Activated CD8-positive, alpha-beta T cell treated with anti-CD3 and anti-CD28 coated beads for 36 hours (primary cell): ENCODE measurements at regions of chr9 and their contacts with region 1.

Region 1: DNA sequence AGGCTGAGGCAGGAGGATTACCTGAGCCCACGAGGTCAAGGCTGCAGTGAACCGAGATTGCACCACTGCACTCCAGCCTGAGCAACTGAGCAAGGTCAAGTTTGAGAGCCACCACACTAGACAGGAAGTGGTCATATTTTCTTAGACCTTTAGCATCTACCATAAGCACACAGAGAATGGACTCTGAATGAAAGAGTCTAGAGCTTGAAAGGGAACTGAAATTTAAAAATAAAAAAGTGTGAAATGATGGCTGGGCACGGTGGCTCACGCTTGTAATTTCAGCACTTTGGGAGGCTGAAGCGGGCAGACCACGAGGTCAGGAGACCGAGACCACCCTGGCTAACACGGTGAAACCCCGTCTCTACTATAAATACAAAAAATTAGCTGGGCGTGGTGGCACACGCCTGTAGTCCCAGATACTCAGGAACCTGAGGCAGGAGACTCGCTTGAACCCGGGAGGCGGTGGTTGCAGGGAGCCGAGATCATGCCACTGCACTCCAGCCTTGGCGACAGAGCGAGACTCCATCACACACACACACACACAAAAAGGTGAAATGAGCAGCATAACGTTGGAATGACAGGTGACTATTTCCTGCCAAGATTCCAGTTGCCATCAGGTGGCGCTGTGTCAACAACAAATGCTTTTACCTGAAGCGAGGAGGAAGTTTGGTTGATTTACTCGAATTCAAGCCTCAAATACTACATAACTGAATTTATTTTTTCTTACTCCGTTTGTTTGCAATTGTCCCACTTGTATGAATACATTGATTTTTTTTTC is 21.3 kb upstream of the AK3 start:
- DNase-seq: peak; percentile 92
- ATAC-seq: peak; percentile 82
- H3K4me3 Mint-ChIP-seq: peak overlapping the region; percentile 40
- H3K27ac Mint-ChIP-seq: peak overlapping the region; percentile 49
- H3K4me1 Mint-ChIP-seq: peaks cover 12% of the 10 kb centered on the region
- H3K27me3 Mint-ChIP-seq: peaks cover 11% of the 10 kb centered on the region
- CTCF ChIP-seq: peak; percentile 83

Region 2: GRCh38 chr9:3916984-3917383 is 845.3 kb before region 1 on chr9:
- CTCF ChIA-PET with region 1: no interaction called
- POLR2A ChIA-PET with region 1: no interaction called
- intact Hi-C with region 1: no loop called
- DNase-seq: no peak
- ATAC-seq: no peak
- H3K4me3 Mint-ChIP-seq: no peak overlapping the region
- H3K27ac Mint-ChIP-seq: no peak overlapping the region
- H3K4me1 Mint-ChIP-seq: no peaks in the 10 kb centered on the region
- H3K27me3 Mint-ChIP-seq: peaks cover 4% of the 10 kb centered on the region
- CTCF ChIP-seq: no peak

Region 3: DNA sequence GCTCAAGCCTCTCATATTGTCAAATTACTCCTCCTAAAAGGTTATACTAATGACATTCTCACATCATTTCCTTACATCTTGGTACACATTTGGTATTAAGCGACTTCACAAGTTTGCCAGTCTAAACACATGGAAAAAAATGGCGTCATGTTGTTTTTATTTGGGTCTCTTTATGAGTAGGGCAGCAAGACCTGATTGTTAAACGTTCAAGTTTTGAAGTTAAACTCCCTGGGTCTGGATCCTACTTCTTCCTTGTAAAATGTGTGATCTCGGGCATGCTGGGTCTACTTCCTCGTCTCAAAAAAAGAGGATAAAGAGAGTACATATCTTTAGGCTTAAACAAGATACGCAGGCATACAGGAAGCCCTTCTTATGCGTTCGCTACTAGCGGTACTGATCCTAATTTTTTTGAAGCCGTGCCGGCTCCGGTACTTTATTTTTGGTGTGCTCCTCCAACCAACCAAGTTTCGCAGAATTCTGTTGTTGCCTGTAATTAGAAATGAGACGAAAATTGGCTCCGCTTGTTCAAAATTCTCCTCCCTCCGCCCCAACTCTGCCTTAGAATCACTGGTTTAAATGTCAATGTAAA is 83.5 kb before region 1 on chr9:
- CTCF ChIA-PET with region 1: no interaction called
- POLR2A ChIA-PET with region 1: no interaction called
- intact Hi-C with region 1: no loop called
- DNase-seq: no peak
- ATAC-seq: peak; percentile 23
- H3K4me3 Mint-ChIP-seq: no peak overlapping the region
- H3K27ac Mint-ChIP-seq: no peak overlapping the region
- H3K4me1 Mint-ChIP-seq: peaks cover 7% of the 10 kb centered on the region
- H3K27me3 Mint-ChIP-seq: no peaks in the 10 kb centered on the region
- CTCF ChIP-seq: no peak

Region 4: DNA sequence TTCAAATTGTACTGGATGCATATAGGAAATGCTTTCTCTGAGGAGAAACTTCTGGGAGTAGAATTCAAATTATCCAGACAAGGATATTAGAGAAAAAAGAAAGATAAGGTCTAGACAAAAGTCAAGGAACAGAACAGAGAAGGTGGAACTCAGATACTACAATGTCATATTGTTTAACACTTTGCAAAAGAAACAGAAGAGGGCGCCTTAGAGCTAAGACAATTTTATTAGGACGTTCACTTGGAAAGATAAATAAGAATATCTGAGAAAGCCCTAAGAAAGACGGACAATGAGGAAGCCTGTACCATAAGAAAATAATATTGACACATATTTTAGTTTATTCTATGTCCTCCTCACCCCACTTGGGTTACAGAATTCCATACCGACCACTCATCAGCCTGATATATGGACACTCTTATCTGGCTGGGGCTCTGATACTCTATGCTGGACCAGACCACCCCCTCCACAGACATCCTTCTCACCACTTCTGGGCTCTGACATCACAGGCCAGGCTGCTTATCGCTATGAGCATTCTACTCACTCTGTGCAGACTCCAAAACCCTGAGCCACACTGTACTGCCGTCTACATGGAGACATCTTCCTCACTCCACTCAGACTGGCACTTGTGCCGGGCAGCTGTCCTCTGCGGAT is 12.1 kb before region 1 on chr9:
- CTCF ChIA-PET with region 1: interaction called, 18 read pairs
- POLR2A ChIA-PET with region 1: interaction called, 3 read pairs
- intact Hi-C with region 1: no loop called
- DNase-seq: no peak
- ATAC-seq: peak; percentile 61
- H3K4me3 Mint-ChIP-seq: no peak overlapping the region
- H3K27ac Mint-ChIP-seq: no peak overlapping the region
- H3K4me1 Mint-ChIP-seq: peaks cover 19% of the 10 kb centered on the region
- H3K27me3 Mint-ChIP-seq: no peaks in the 10 kb centered on the region
- CTCF ChIP-seq: peak; percentile 47

Region 5: GRCh38 chr9:4792572-4793458 is 30.5 kb after region 1 on chr9 and contains the start of gene RCL1:
- CTCF ChIA-PET with region 1: interaction called, 27 read pairs
- POLR2A ChIA-PET with region 1: interaction called, 3 read pairs
- intact Hi-C with region 1: no loop called
- DNase-seq: peak; percentile 96
- ATAC-seq: peak; percentile 94
- H3K4me3 Mint-ChIP-seq: peak within 1 kb of the TSS; percentile 96
- H3K27ac Mint-ChIP-seq: peak within 1 kb of the TSS; percentile 95
- H3K4me1 Mint-ChIP-seq: peaks cover 48% of the 10 kb centered on the region
- H3K27me3 Mint-ChIP-seq: peaks cover under 1% of the 10 kb centered on the region
- CTCF ChIP-seq: no peak
- total RNA-seq, gene RCL1: 24.5 to 28.6 TPM

Region 6: DNA sequence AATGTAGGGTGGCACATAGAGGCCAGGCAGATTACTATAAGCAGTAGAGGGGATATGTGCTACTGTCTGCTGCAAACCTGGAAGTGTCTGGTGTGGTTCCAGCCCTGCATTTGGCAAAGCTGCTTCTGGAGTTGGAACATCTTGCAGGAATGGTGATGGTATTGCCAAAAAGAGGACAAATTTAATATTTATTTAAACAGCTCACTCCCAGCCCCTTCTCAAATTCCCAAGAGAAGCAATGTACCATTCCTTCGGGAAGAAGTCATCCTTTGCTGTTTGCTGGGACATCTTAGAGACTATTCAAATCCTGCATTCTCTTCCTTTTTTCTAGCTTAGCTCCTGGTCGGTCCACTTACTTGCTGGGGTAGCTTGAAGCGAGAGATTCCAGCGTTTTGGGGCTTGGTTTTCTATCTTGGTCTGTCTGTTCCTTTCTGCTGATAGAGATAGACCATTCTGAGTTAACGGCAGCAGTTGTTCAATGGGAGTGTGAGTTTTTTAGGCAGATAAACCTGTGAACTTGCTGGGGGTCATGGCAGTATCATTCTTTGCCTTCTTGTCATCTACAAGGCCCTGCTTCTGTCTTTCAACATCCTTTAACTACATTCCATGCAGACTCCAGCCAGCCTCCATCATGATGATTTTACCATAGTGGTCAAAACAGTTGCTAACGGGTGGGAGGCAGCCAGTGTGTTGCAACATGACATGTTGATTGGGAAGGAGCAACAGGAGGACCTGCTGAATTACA is 100.4 kb after region 1 on chr9:
- CTCF ChIA-PET with region 1: interaction called, 10 read pairs
- POLR2A ChIA-PET with region 1: no interaction called
- intact Hi-C with region 1: no loop called
- DNase-seq: no peak
- ATAC-seq: no peak
- H3K4me3 Mint-ChIP-seq: no peak overlapping the region
- H3K27ac Mint-ChIP-seq: no peak overlapping the region
- H3K4me1 Mint-ChIP-seq: peaks cover 19% of the 10 kb centered on the region
- H3K27me3 Mint-ChIP-seq: no peaks in the 10 kb centered on the region
- CTCF ChIP-seq: no peak

Region 7: GRCh38 chr9:4923580-4924544 is 161.6 kb after region 1 on chr9:
- CTCF ChIA-PET with region 1: interaction called, 25 read pairs
- POLR2A ChIA-PET with region 1: no interaction called
- intact Hi-C with region 1: loop called (anchors 5 kb)
- DNase-seq: peak; percentile 30
- ATAC-seq: peak; percentile 79
- H3K4me3 Mint-ChIP-seq: no peak overlapping the region
- H3K27ac Mint-ChIP-seq: peak overlapping the region; percentile 65
- H3K4me1 Mint-ChIP-seq: peaks cover 28% of the 10 kb centered on the region
- H3K27me3 Mint-ChIP-seq: no peaks in the 10 kb centered on the region
- CTCF ChIP-seq: peak; percentile 39

Region 8: GRCh38 chr9:5008202-5008601 is 245.9 kb after region 1 on chr9:
- CTCF ChIA-PET with region 1: no interaction called
- POLR2A ChIA-PET with region 1: no interaction called
- intact Hi-C with region 1: no loop called
- DNase-seq: no peak
- ATAC-seq: no peak
- H3K4me3 Mint-ChIP-seq: no peak overlapping the region
- H3K27ac Mint-ChIP-seq: no peak overlapping the region
- H3K4me1 Mint-ChIP-seq: peaks cover 14% of the 10 kb centered on the region
- H3K27me3 Mint-ChIP-seq: no peaks in the 10 kb centered on the region
- CTCF ChIP-seq: no peak

Region 9: DNA sequence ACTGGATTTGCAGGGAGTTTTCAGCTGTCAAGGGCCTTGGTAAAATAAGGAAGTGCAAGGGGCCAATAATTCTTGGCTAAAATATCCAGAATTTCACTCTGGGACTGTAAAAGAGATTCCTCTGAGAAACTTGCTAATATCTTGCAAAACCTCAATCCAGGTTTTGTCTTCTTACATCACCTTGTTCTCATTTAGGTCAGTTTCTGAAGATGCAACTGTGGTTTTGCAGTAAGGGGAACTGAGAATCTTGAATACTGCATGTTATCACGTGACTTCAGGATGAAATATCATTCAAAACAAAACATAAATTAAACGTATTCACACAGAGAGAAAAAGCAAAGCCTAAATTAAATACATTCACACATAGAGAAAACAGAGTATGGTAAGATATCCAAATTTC is 831.6 kb after region 1 on chr9:
- CTCF ChIA-PET with region 1: interaction called, 3 read pairs
- POLR2A ChIA-PET with region 1: no interaction called
- intact Hi-C with region 1: loop called (anchors 10 kb)
- DNase-seq: no peak
- ATAC-seq: no peak
- H3K4me3 Mint-ChIP-seq: no peak overlapping the region
- H3K27ac Mint-ChIP-seq: no peak overlapping the region
- H3K4me1 Mint-ChIP-seq: peaks cover 26% of the 10 kb centered on the region
- H3K27me3 Mint-ChIP-seq: no peaks in the 10 kb centered on the region
- CTCF ChIP-seq: no peak